Activated B cell treated with CpG ODN at 0.5 μM for 24 hours (primary cell): ENCODE measurements at regions of chr3 and their contacts with region 1.

Region 1: GRCh38 chr3:197906023-197906849 is 43.8 kb upstream of the RPL35A start:
- DNase-seq: peak; percentile 58
- ATAC-seq: peak; percentile 83
- H3K4me3 Mint-ChIP-seq: no peak overlapping the region
- H3K27ac Mint-ChIP-seq: peak overlapping the region; percentile 46
- H3K4me1 Mint-ChIP-seq: peaks cover 14% of the 10 kb centered on the region
- H3K27me3 Mint-ChIP-seq: no peaks in the 10 kb centered on the region
- CTCF ChIP-seq: peak; percentile 88

Region 2: GRCh38 chr3:197942956-197943556 is 36.8 kb after region 1 on chr3:
- CTCF ChIA-PET with region 1: interaction called, 7 read pairs
- POLR2A ChIA-PET with region 1: no interaction called
- intact Hi-C with region 1: loop called (anchors 1 kb)
- DNase-seq: no peak
- ATAC-seq: peak; percentile 85
- H3K4me3 Mint-ChIP-seq: no peak overlapping the region
- H3K27ac Mint-ChIP-seq: no peak overlapping the region
- H3K4me1 Mint-ChIP-seq: no peaks in the 10 kb centered on the region
- H3K27me3 Mint-ChIP-seq: no peaks in the 10 kb centered on the region
- CTCF ChIP-seq: no peak

Region 3: GRCh38 chr3:198080521-198081280 is 174.5 kb after region 1 on chr3:
- CTCF ChIA-PET with region 1: interaction called, 9 read pairs
- POLR2A ChIA-PET with region 1: no interaction called
- intact Hi-C with region 1: loop called (anchors 1 kb)
- DNase-seq: peak; percentile 86
- ATAC-seq: peak; percentile 90
- H3K4me3 Mint-ChIP-seq: peak overlapping the region; percentile 89
- H3K27ac Mint-ChIP-seq: peak overlapping the region; percentile 79
- H3K4me1 Mint-ChIP-seq: peaks cover 11% of the 10 kb centered on the region
- H3K27me3 Mint-ChIP-seq: peaks cover 25% of the 10 kb centered on the region
- CTCF ChIP-seq: peak; percentile 41